BJ (cell line): ENCODE measurements at regions of chr1 and their contacts with region 1.

Region 1: DNA sequence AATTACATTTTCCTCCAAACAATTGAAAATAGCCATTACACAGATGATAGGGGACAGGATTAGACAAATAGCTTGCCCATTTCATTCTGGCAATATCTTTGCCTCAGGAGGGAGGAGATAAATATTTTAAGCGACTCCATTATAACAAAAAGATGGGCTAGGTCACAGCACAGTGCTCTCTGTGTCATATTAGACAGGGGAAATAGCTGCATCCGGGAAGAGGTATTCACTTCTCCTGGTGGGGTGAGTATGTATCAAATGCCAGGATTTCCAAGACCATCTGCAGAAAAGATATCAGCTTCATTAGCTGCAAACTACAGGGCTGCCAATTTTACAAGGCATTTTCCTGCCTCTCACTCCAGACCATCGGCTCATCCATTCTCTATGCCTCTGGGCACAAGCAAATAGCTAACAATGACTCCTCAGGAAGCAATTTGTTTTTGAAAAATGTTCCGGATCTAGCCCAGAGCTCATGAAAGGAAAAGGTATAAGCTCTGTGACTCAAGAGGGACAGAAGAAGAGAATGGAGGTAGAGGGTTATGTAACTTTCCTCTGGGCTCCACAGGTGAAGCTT is 41.9 kb upstream of the ANGPTL7 start:
- DNase-seq: peak; percentile 37
- H3K4me3 ChIP-seq: no peak overlapping the region
- H3K27me3 ChIP-seq: no peaks in the 10 kb centered on the region
- CTCF ChIP-seq: no peak

Region 2: DNA sequence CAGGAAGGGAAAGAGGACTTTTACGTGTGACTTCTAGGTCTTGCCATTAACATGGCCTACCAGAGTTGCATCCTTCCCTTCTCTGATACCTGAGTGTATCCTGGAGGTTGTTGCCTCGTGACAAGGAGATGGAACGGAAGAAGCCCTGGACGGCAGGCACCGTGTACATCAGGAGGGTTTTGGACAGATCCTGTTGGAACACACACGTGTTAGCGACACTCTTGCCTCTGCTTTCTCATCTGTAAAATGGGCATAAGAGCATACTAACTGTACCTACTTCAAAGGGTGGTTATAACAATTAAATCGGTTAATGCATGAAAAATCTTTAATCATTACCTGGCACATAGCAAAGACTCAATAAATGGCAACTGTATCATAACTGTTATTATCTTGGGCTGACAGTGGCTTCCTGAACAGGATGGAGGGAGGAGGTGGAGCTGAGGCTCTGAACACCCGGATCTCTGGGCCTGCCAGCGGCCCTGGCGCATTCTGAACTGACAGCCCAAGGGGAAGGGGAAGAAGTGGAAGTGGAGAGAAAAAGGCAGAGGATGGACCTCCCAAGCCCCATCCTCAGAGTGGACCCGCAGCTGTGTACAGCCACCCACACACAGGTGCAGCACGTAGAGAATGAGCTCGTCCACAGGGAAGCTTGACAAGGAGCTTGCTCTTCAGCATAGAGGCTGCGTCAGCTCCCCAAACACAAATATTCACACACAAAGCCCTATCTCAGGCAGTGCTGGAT is 17.5 kb before region 1 on chr1:
- CTCF ChIA-PET with region 1: no interaction called
- POLR2A ChIA-PET with region 1: no interaction called
- DNase-seq: no peak
- H3K4me3 ChIP-seq: no peak overlapping the region
- H3K27me3 ChIP-seq: no peaks in the 10 kb centered on the region
- CTCF ChIP-seq: no peak

Region 3: DNA sequence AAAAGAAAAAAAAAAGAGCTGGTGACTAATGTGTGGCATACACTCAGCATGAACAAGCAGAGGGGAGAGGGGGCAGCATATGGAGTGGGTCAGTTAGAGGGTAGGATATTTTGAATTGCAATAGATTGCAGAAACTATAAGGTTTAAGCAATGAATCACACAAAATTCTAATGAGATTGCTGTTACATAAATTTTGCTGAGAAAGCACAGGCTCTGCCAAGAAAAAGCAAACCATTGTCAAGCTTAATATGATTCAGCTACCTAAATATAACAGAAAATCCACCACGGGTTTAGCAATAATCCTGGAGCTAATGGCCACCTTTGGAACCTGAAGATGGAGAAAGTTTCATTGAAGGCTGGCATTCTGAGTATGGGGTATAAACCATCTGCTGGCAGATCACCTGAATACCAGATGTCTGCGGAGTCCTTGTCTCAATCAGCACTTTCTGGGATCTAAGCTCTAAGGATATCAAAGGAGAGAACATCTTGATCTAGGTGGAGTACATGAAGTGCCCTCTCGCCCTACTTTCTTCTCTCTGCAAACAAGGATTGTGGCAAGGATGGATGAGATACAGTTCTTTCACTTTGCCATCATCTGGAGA is 11.5 kb after region 1 on chr1:
- CTCF ChIA-PET with region 1: interaction called, 15 read pairs
- POLR2A ChIA-PET with region 1: interaction called, 5 read pairs
- DNase-seq: peak; percentile 89
- H3K4me3 ChIP-seq: no peak overlapping the region
- H3K27me3 ChIP-seq: no peaks in the 10 kb centered on the region
- CTCF ChIP-seq: no peak

Region 4: GRCh38 chr1:11198851-11199594 is 51.7 kb after region 1 on chr1:
- CTCF ChIA-PET with region 1: no interaction called
- POLR2A ChIA-PET with region 1: no interaction called
- DNase-seq: no peak
- H3K4me3 ChIP-seq: no peak overlapping the region
- H3K27me3 ChIP-seq: no peaks in the 10 kb centered on the region
- CTCF ChIP-seq: no peak